Sigmoid colon (tissue), 7 donors: ENCODE measurements at regions of chr10 and their contacts with region 1.

Region 1: DNA sequence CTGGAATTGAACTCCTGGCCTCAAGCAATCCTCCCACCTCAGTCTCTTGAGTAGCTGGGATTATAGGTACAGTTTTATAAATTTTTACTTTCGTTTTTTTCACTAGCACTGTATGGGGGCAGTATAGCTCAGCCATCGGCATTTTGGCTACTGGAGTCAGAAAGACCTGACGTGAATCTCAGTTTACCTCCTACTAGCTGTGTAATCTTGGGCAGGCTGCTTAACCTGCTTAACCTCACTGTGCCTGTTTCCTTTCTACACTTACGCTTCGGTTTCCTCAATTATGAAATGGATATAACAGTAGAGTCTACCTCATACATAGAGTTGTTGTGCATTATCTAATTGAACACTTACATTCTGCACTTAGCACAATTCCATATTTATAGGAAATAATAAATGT is 16.7 kb downstream of the STN1 start:
- DNase-seq: no peak
- H3K4me3 ChIP-seq: no peak overlapping the region
- H3K27ac ChIP-seq: no peak overlapping the region
- H3K4me1 ChIP-seq: no peaks in the 10 kb centered on the region
- H3K27me3 ChIP-seq: no peaks in the 10 kb centered on the region
- CTCF ChIP-seq: no peak
- EP300 ChIP-seq: no peak
- POLR2A ChIP-seq: no peak

Region 2: DNA sequence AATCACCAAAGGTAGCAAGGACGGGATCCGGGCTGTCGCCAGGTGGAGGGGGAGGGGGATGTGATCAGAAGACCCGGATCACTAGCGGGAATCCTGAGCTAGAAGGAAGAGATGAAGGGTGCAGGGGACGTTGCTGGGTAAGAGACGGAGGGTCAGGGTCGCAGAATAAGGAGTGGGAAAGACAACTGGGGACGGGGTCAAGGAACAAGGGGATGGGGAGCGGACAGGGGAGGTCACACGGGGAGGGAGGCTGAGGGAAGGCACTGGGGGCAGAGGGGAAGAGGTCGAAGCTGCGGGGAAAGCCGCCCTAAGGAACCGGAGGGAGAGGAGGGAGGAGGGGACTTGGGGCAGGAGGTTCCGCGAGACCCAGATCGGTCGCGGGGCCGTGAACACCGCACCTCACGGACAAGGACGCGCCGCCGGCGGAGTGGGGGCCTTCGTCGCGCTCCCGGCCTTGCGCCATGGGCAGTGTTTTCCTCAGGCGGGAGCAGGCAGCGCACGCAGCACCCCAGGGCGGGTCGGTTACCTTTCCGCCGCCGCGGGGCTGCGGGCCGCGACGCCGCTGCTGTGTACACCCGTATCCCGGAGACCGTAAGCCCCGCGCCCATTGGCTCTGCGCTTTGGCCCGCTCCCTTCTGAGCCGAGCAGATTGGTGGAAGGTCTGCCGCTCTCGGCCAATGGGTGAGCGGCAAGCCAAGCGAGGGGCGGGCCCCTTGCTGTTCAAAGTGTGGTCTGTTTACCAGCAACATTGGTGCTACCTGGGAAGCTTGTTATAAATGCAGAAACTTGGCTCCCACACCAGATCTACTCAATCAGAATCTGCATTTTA is 330.7 kb after region 1 on chr10 and contains the start of gene CFAP43:
- intact Hi-C with region 1: loop called (anchors 10 kb)
- DNase-seq: peak; percentile 99
- H3K4me3 ChIP-seq: peak within 1 kb of the TSS; percentile 54 to 88 (median 79)
- H3K27ac ChIP-seq: peak within 1 kb of the TSS in 3 of 4 donors; percentile 31 to 47 (median 40)
- H3K4me1 ChIP-seq: peaks cover 0 to 15% (median 6%) of the 10 kb centered on the region in 4 donors
- H3K27me3 ChIP-seq: no peaks in the 10 kb centered on the region
- CTCF ChIP-seq: no peak
- EP300 ChIP-seq: no peak
- POLR2A ChIP-seq: no peak
- total RNA-seq, gene CFAP43: 0.36 to 0.83 (median 0.59) TPM